Breast epithelium (tissue), 4 donors: ENCODE measurements at regions of chr14 and their contacts with region 1.

Region 1: GRCh38 chr14:20613094-20614037 is 22.2 kb upstream of the RNASE12 start:
- DNase-seq: peak; percentile 71 to 84
- H3K4me3 ChIP-seq: peak overlapping the region; percentile 42 to 69 (median 62)
- H3K27ac ChIP-seq: peak overlapping the region; percentile 74 to 83
- H3K4me1 ChIP-seq: no peaks in the 10 kb centered on the region
- H3K27me3 ChIP-seq: no peaks in the 10 kb centered on the region
- CTCF ChIP-seq: peak; percentile 88 to 97 (median 96)
- POLR2A ChIP-seq: no peak

Region 2: DNA sequence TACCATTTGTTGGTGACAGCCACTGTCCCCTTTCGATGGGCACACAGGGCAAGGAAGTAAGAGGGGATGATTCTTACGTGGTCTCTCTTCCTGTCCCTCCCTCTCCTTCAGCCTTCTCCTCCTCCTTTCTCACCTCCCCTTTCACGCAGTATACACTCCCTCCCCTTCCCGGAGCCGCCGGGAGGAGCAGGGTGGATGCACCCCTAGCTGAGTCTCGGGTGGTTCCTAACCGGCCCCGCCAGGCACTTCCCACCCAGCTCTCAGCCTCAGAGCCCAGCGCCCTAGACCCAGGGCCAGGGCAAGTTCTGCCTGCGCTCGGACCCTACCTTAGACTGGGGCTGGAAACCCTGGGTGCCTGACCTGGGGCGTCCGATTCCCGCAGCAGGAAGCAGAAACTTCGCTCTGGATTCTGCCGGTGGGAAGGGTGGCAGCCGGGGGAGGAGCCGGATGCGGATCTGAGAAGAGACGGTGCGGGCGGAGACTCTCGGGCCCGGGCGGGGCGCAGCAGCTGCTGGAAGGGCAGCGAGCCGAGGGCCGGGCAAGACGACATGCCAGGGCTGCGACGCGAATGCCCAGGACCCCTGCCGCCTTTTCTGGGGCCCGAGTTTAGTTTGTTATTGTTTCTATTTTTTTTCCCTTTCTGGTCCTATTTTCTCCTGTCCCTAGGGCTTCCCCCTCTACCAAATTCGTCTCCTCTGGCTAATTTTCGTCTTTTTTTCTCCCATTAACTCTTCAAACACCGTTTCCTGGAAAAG is 200.1 kb before region 1 on chr14 and contains the start of gene TEP1:
- intact Hi-C with region 1: loop called (anchors 5 kb)
- DNase-seq: peak; percentile 85 to 92
- H3K4me3 ChIP-seq: peak within 1 kb of the TSS; percentile 79 to 86 (median 81)
- H3K27ac ChIP-seq: peak within 1 kb of the TSS; percentile 95 to 97
- H3K4me1 ChIP-seq: peaks cover 2 to 4% of the 10 kb centered on the region in 2 donors
- H3K27me3 ChIP-seq: no peaks in the 10 kb centered on the region
- CTCF ChIP-seq: peak in 2 of 3 donors; percentile 17 to 20
- POLR2A ChIP-seq: peak; percentile 53
- total RNA-seq, gene TEP1: 21.3 to 34.5 (median 27.2) TPM

Region 3: GRCh38 chr14:20454516-20455354 is 158.6 kb before region 1 on chr14 and contains the starts of genes APEX1 and OSGEP:
- intact Hi-C with region 1: loop called (anchors 10 kb)
- DNase-seq: peak; percentile 99
- H3K4me3 ChIP-seq: peak within 1 kb of the TSS; percentile 60 to 85 (median 76)
- H3K27ac ChIP-seq: peak within 1 kb of the TSS; percentile 94 to 95
- H3K4me1 ChIP-seq: peaks cover 0 to 2% of the 10 kb centered on the region in 2 donors
- H3K27me3 ChIP-seq: no peaks in the 10 kb centered on the region
- CTCF ChIP-seq: peak in 1 of 3 donors; percentile 5
- POLR2A ChIP-seq: no peak
- total RNA-seq, gene APEX1: 129 to 165 (median 150) TPM
- total RNA-seq, gene OSGEP: 38.1 to 66.9 (median 57.5) TPM

Region 4: DNA sequence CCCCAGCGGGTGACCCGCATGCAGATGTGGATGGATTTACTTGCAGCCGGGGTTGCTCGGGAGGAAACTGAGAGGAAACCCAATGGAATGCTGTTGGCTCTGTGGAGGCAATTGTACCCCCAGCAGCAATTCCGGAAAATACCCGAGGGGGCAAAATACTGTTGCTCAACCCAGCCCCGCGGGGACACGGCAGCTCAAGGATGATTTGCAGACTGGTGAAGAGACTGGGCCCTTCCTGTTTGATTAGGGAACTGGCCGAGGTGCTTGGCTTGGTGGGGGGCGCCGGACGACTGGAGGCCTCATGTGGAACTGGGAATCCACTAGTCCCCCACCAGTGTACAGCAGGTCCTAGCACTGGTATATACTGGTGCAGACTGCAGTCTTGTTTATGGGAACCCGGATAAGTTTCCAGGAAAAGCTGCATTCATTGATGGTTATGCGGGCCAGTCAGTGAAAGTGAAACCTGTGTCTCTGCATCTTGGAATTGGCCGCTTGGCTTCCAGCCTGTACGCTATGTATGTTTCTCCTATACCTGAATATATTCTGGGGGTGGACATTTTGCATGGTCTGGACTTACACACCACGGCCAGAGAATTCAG is 11.8 kb before region 1 on chr14:
- intact Hi-C with region 1: no loop called
- DNase-seq: no peak
- H3K4me3 ChIP-seq: no peak overlapping the region
- H3K27ac ChIP-seq: no peak overlapping the region
- H3K4me1 ChIP-seq: no peaks in the 10 kb centered on the region
- H3K27me3 ChIP-seq: no peaks in the 10 kb centered on the region
- CTCF ChIP-seq: no peak
- POLR2A ChIP-seq: no peak

Region 5: GRCh38 chr14:20632682-20633428 is 19.5 kb after region 1 on chr14:
- intact Hi-C with region 1: loop called (anchors 1 kb)
- DNase-seq: no peak
- H3K4me3 ChIP-seq: peak overlapping the region; percentile 24 to 53 (median 40)
- H3K27ac ChIP-seq: no peak overlapping the region
- H3K4me1 ChIP-seq: peaks cover 0 to 8% of the 10 kb centered on the region in 2 donors
- H3K27me3 ChIP-seq: peaks cover 0 to 21% of the 10 kb centered on the region in 2 donors
- CTCF ChIP-seq: no peak
- POLR2A ChIP-seq: no peak

Region 6: DNA sequence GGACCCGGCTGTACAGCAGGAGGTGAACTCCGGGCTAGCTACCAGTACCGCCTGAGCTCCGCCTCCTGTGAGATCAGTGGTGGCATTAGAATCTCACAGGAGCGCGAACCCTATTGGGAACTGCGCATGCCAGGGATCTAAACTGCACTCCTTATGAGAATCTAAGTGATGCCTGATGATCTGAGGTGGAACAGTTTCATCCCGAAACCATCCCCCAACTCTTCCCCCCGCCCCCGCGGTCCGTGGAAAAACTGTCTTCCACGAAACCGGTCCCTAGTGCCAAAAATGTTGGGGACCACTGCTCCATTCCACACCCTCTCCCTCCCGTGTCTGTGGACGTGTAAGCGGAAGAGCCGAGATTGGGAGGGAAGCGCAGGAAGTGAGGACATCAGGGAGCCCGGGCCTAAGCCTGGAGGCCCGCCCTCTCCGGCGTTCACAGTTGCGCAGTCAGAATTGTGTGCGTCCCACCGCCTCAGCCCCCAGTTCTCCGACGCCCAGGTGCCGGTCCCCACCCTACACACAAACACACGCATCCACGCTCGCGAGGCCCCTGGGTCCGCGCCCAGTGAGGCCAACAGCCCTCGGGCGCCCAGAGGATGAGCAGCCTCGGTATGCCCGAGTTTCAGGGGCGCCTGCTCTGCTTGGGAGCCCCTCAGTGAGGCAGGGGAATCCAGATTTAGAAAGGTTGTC is 69.2 kb after region 1 on chr14:
- intact Hi-C with region 1: loop called (anchors 5 kb)
- DNase-seq: peak; percentile 87 to 92
- H3K4me3 ChIP-seq: peak overlapping the region; percentile 83 to 93 (median 88)
- H3K27ac ChIP-seq: peak overlapping the region; percentile 99 to 100
- H3K4me1 ChIP-seq: peaks cover 0 to 9% of the 10 kb centered on the region in 2 donors
- H3K27me3 ChIP-seq: no peaks in the 10 kb centered on the region
- CTCF ChIP-seq: peak in 1 of 3 donors; percentile 9
- POLR2A ChIP-seq: peak; percentile 98